OCI-LY7 (cell line): ENCODE measurements at regions of chr2 and their contacts with region 1.

Region 1: DNA sequence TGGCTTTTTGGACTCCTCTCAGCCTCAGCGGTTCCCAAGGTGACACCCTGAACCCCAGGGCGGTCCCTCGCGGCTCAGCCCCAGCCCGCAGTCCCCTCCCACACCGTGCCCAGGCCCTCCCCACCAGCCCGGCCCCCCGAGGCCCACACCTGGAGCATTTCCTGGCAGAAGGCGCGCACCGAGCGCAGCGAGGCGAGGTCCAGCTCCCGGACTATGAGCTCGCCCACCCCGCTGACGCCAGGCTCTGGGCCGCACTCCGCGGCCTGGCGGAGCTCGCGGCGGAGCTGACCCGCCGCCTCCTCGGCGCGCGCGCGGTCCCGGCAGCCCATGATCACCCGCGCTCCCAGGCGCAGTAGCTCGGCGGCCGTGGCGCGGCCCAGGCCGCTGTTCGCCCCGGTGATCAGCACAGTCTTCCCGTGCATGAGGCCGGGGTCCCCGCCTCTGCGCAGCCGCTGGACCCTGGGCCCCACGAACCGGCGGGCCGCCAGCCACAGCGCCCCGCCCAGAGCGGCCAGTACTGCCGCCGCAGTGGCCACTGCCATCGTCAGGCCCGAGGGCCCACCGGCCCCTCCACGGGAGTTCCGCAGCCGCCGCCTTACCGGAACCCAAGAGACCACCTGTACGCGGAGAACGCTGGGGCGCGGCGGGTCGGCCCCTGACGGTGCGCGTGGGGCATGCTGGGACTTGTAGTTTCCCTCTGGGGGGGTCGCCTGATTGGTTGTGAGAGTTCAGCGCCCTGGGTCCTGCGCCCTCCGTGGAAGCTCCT is at the start of gene RDH14:
- DNase-seq: peak; percentile 94
- H3K4me3 ChIP-seq: peak within 1 kb of the TSS; percentile 88
- H3K27ac ChIP-seq: peak within 1 kb of the TSS; percentile 55
- H3K4me1 ChIP-seq: peaks cover 24% of the 10 kb centered on the region
- CTCF ChIP-seq: no peak
- total RNA-seq, gene RDH14: 25.2 and 27.5 TPM in 2 replicates

Region 2: DNA sequence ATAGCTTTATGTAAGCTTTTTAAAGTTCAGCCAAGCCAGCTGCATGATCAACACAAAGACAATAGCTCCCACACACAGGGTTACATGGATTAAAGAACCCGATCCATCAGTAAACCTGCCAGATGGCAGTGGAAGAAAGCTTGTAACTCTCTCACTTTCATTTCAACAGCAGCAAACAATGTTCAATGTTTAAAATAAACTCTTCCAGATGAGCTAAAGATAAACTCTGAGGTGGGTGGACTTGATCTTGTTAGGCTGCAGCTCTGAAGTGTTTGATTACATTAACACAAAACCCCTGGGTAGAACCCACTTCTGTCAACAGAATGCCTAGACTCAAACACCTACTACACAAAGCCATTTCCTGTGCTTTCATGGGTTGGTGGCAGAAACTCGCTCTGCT is 13.6 kb before region 1 on chr2:
- CTCF ChIA-PET with region 1: no interaction called
- POLR2A ChIA-PET with region 1: interaction called, 10 read pairs
- intact Hi-C with region 1: no loop called
- DNase-seq: peak; percentile 5
- H3K4me3 ChIP-seq: no peak overlapping the region
- H3K27ac ChIP-seq: no peak overlapping the region
- H3K4me1 ChIP-seq: peaks cover 13% of the 10 kb centered on the region
- CTCF ChIP-seq: no peak

Region 3: DNA sequence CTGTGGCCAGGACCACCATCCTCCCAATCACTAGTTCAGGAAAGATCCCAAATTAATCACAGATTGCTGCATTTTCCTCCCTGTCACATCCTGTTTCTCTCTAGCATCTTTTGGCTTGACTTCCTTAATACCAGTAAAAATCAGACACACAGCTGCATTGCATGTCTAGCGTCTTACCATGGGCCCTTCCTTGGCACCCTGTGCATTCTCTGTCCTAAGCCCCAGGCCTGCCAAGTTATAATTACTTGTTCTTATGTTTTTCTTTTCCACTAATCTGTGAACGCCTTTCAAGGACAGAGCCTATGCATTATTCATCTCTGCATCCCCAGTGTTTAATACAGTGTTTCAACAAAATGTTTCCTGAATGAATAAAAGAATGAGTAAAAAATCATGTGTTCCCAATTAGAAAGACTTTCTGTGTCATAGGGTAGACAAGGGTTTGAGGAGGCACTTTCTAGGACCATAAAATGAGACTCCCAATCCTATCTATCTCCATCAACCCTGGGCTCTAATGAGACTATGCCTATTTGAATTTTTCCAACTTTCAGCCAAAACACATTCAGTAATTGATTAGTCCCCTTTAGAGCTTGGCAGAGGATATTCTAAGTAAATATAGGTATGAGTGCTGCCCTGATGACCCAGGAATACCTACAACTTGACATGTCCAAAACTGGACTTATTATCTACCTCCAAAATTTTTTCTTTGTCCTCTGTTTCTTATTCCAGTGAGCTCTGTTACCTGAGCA is 39.5 kb after region 1 on chr2:
- CTCF ChIA-PET with region 1: interaction called, 3 read pairs
- POLR2A ChIA-PET with region 1: interaction called, 6 read pairs
- intact Hi-C with region 1: loop called (anchors 2 kb)
- DNase-seq: peak; percentile 2
- H3K4me3 ChIP-seq: no peak overlapping the region
- H3K27ac ChIP-seq: no peak overlapping the region
- H3K4me1 ChIP-seq: peaks cover 26% of the 10 kb centered on the region
- CTCF ChIP-seq: no peak

Region 4: DNA sequence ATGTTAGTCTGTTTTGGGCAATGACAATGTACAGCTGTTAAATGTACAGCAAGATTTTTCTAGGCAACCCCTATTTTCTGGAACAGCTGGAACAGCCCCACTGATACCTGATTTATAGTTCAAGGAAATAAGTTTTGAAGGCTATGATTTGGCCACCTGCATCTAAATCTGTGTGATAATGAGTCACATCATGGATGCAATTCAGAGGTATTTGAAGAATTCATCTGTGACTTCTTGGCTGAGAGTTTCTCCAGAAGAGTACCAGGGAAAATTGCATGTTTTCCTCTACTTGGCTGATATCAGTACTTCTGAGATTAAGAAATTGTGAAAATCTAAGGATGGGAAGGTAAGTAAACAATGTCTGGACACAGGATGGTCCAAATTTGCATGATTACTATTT is 69.9 kb after region 1 on chr2:
- CTCF ChIA-PET with region 1: no interaction called
- POLR2A ChIA-PET with region 1: no interaction called
- intact Hi-C with region 1: no loop called
- DNase-seq: no peak
- H3K4me3 ChIP-seq: no peak overlapping the region
- H3K27ac ChIP-seq: no peak overlapping the region
- H3K4me1 ChIP-seq: no peaks in the 10 kb centered on the region
- CTCF ChIP-seq: no peak

Region 5: DNA sequence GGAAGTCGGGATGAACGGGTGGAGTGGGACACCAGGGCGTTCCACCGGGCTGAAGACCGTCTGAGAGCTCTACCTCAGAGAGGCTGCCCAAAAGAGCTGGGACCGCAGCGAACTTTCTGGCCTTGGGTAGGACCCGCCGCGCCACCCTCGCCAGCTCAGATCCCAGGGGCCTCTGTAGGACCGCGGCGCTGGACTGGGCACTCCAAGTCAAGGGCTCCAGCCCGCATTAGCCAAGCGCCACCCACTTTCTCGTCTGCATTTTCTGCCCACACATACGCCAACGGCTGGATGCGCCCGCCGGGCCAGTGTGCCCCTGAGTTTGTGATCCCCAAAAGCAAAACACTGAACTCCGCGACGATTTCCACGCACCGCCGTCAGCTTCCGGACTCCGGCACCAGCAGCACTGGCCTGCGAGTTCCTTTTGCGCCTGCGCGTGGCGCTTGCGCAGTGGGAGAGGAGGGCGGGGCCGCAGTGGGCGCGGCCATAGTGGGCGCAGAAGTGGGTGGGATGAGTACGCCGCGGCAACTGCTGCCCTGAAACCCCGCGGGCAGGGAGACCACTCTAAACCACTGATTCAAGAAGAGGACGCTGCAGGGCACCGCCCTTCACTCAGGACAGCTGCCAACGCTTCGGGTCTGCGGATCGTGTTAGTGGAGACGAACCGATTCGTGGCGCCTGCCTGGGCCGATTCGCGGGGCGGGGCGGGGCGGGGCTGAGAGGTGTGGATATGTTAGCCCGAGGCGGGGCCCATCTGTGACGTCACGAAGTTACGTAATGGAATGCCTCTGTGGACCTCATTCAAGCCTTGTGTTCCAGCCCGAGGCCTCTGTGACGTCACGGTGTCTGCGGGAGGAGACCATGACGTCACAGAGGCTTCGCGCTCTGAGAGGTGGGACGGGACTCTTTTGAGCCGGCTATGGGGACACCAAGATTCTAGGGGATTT is 787.7 kb after region 1 on chr2:
- CTCF ChIA-PET with region 1: no interaction called
- POLR2A ChIA-PET with region 1: interaction called, 4 read pairs
- intact Hi-C with region 1: loop called (anchors 2 kb)
- DNase-seq: peak; percentile 93
- H3K4me3 ChIP-seq: peak overlapping the region; percentile 96
- H3K27ac ChIP-seq: peak overlapping the region; percentile 48
- H3K4me1 ChIP-seq: peaks cover 5% of the 10 kb centered on the region
- CTCF ChIP-seq: no peak

Region 6: DNA sequence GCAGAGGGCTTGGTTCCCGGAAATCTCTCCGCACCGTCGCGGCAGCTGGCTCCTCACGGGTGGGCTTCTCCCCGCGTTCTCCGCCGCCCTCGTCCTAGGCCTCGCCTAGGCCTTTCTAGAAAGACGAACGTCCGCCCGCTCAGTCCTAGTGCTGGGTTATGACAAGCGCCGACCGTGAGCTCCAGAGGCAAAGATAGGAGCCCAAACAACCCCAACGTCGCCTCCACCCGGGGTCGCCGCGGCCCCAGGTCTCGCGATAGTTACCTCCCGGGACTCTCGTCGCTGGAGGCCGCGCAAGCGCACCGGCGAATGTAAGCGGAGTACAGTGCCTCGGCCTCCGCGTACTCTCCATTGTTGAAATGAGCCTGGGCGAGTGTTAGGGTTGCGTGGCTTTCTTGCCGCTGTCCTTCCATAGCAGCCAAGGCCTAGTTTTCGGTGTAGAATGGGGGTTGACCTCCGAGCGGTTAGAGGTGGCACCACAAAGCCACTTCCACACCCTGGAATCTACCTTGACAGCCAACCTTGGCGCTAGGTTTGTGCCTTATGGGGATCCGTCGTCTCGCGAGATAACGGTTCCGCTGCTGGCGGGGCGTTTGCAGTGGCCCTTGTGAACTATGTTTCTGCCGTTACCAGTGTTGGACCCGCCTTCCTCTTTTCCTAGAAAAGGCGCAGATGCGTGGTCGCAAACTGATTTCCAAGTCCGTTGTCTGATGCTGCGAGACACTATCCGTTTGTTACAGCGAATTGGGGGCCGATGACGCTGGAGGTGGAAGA is 1341.4 kb after region 1 on chr2 and contains the start of gene TTC32:
- CTCF ChIA-PET with region 1: no interaction called
- POLR2A ChIA-PET with region 1: no interaction called
- intact Hi-C with region 1: loop called (anchors 5 kb)
- DNase-seq: peak; percentile 94
- H3K4me3 ChIP-seq: peak within 1 kb of the TSS; percentile 89
- H3K27ac ChIP-seq: peak within 1 kb of the TSS; percentile 82
- H3K4me1 ChIP-seq: peaks cover 25% of the 10 kb centered on the region
- CTCF ChIP-seq: no peak
- total RNA-seq, gene TTC32: 16.3 and 21.1 TPM in 2 replicates